ENCODE measurements at regions of chr2 and their contacts with region 1.

Region 1: DNA sequence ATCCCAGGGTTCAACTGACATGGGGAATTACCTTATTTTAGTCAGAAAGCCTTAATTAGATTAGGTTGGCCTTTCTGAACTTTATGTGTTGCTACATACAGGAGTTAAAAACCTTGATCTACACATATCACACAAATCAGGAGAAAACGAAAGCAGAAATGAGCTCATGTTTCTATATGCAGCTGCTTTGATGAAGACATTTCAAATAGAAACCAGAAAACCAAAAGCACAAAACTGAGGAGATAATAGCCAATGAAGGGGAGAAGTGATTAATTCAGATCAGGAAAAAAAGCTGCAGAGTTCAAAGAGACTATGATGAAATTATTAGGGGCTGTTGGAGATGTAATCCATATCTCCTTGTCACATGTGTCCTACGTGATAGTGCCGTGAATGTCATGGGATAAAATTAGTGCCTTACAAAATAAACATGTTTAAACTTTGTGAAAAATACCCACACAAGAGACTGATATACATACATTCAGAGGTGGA is 255.0 kb downstream of the CAMKMT start:
- DNase-seq: peak; percentile 22
- H3K4me3 Mint-ChIP-seq: no peak overlapping the region
- H3K27ac Mint-ChIP-seq: no peak overlapping the region
- H3K4me1 Mint-ChIP-seq: peaks cover 7% of the 10 kb centered on the region
- H3K27me3 Mint-ChIP-seq: no peaks in the 10 kb centered on the region

Region 2: DNA sequence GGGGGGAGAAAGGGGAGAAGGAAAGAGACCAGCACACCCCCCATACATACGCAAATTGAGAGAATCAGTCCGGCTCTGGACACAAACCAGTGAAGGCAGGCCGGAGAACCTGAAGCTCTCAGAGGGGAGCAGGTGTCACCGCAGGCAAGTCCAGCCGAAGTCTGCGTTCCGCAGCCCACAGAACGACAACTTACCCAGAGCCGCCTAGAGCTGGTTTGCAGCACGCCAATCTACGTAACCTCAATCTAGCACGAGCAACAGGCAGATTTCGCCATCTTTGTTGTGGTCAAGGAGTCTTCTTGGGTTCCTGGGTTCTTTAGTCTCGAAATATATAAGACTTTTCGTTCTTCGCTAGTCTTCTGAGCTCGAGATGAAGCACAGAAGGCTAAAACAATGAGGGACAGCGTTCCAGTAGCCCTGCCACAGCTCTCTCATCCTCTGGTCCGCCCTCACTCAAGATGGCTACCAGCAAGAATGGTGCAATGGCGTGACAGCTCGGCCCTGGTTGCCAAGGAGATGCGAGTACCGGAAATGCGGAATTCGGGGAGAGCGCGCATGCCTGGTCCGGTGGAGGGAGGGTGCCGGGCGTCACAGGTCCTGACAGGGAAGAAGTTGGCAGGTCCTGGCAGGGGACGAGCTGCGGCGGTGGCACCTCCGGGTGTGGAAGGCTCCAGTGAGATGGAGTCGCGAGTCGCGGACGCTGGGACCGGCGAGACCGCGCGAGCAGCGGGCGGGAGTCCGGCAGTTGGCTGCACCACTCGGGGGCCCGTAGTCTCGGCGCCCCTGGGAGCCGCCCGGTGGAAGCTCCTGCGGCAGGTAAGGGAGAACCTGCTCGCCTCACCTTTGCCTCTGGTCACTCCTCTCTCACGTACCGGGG is 255.1 kb before region 1 on chr2 and contains the starts of genes CAMKMT and PREPL:
- CTCF ChIA-PET with region 1: no interaction called
- intact Hi-C with region 1: loop called (anchors 2 kb)
- DNase-seq: peak; percentile 99
- H3K4me3 Mint-ChIP-seq: peak within 1 kb of the TSS; percentile 97
- H3K27ac Mint-ChIP-seq: peak within 1 kb of the TSS; percentile 99
- H3K4me1 Mint-ChIP-seq: peaks cover 42% of the 10 kb centered on the region
- H3K27me3 Mint-ChIP-seq: no peaks in the 10 kb centered on the region
- total RNA-seq, gene CAMKMT: 12.8 to 19.6 TPM
- total RNA-seq, gene PREPL: 27.8 to 29.6 TPM

Region 3: DNA sequence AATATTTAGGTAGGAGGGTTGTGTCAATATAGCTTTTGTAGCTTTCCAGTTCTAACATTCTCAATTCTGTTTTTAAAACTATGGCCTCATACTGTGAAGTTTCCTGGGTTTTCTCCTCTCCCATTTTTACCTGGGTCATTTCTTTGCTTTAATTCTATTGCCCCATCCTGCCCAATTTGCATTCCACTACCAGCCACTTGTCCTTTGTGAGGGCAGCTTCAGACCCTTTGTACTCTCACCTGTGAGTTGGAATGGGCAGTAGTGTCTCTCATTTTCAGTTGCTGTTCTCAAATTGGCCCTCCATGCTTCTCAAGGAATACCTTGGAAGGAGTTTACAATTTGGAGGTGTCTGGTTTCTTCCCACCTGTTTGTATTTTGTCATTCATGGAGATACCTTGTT is 146.6 kb before region 1 on chr2:
- CTCF ChIA-PET with region 1: no interaction called
- intact Hi-C with region 1: no loop called
- DNase-seq: no peak
- H3K4me3 Mint-ChIP-seq: no peak overlapping the region
- H3K27ac Mint-ChIP-seq: no peak overlapping the region
- H3K4me1 Mint-ChIP-seq: no peaks in the 10 kb centered on the region
- H3K27me3 Mint-ChIP-seq: no peaks in the 10 kb centered on the region

Region 4: GRCh38 chr2:44731505-44731904 is 114.8 kb after region 1 on chr2:
- CTCF ChIA-PET with region 1: interaction called, 3 read pairs
- intact Hi-C with region 1: loop called (anchors 1 kb)
- DNase-seq: no peak
- H3K4me3 Mint-ChIP-seq: no peak overlapping the region
- H3K27ac Mint-ChIP-seq: no peak overlapping the region
- H3K4me1 Mint-ChIP-seq: no peaks in the 10 kb centered on the region
- H3K27me3 Mint-ChIP-seq: no peaks in the 10 kb centered on the region

Region 5: DNA sequence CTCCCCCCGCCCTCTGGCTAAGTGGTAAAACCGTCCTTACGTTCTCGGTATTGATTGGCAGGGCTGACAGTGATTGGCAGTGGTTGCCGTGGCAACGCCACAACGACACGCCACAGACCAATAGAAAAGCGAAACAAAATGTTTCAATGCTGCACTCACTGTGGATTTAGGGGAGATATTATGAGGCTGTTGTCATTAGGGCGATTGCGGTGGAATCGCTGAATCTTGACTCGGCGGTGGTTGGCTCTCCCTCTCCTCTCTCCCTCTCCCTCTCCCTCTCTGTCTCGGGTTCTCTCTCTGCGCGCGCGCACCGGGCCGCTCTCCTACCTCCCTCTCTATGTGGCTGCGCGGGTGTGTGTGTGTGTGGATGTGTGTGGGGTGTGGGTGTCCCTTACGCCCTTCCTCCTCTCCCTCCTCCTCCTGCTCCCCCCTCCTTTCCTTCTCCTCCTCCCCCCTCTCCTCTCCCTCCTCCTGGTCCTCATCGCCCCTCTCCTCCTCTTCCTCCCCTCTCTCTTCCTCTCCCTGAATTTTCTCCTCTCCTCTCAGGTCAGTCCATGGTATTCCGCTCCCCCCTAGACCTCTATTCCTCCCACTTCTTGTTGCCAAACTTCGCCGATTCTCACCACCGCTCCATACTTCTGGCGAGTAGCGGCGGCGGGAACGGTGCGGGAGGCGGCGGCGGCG is 325.0 kb after region 1 on chr2 and contains the start of gene SIX3:
- CTCF ChIA-PET with region 1: no interaction called
- intact Hi-C with region 1: loop called (anchors 5 kb)
- DNase-seq: peak; percentile 66
- H3K4me3 Mint-ChIP-seq: peak within 1 kb of the TSS; percentile 74
- H3K27ac Mint-ChIP-seq: no peak within 1 kb of the TSS
- H3K4me1 Mint-ChIP-seq: peaks cover 49% of the 10 kb centered on the region
- H3K27me3 Mint-ChIP-seq: peaks cover 77% of the 10 kb centered on the region
- total RNA-seq, gene SIX3: not detected

Measured in activated naive CD4-positive, alpha-beta T cell treated with anti-CD3 and anti-CD28 coated beads for 36 hours (primary cell).